ENCODE measurements at regions of chrX and their contacts with region 1.

Region 1: GRCh38 chrX:38654302-38654701 is 93.0 kb downstream of the TSPAN7 start:
- DNase-seq: no peak
- ATAC-seq: peak in 3 of 4 donors; percentile 29 to 55 (median 50)
- H3K4me3 ChIP-seq: no peak overlapping the region
- H3K27ac ChIP-seq: no peak overlapping the region
- H3K4me1 ChIP-seq: peaks cover 0 to 3% (median 0%) of the 10 kb centered on the region in 12 donors
- H3K27me3 ChIP-seq: peaks cover 0 to 9% (median 0%) of the 10 kb centered on the region in 9 donors
- CTCF ChIP-seq: peak; percentile 29 to 61 (median 45)
- POLR2A ChIP-seq: no peak

Region 2: DNA sequence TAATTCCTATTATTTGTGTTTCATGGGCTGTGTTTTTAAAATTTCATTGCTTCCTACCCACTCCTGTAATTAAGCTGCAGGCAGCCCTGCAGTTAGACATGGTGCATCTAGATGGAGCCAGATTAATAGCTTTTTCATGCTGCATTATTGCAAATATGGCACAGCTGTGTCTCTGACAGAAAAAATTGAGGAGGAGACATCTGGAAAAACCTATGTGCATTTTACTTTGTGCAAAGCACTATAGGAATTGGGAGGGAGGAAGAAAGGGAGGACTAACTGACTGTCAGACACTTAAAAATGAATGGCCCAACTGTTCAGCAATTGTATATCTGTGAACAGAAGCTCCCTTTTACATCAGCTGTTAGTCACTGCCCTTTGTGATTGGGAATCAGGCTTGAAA is 318.9 kb before region 1 on chrX:
- intact Hi-C with region 1: loop called in 4 of 10 experiments (anchors 10 kb)
- DNase-seq: no peak
- ATAC-seq: no peak
- H3K4me3 ChIP-seq: no peak overlapping the region
- H3K27ac ChIP-seq: no peak overlapping the region
- H3K4me1 ChIP-seq: no peaks in the 10 kb centered on the region
- H3K27me3 ChIP-seq: peaks cover 0 to 29% (median 0%) of the 10 kb centered on the region in 9 donors
- CTCF ChIP-seq: peak in 5 of 12 donors; percentile 19 to 38 (median 31)
- POLR2A ChIP-seq: no peak

Region 3: GRCh38 chrX:38458071-38458470 is 196.2 kb before region 1 on chrX:
- intact Hi-C with region 1: loop called in 3 of 10 experiments (anchors 5 to 10 kb)
- DNase-seq: no peak
- ATAC-seq: no peak
- H3K4me3 ChIP-seq: no peak overlapping the region
- H3K27ac ChIP-seq: no peak overlapping the region
- H3K4me1 ChIP-seq: no peaks in the 10 kb centered on the region
- H3K27me3 ChIP-seq: peaks cover 0 to 10% (median 0%) of the 10 kb centered on the region in 9 donors
- CTCF ChIP-seq: peak in 5 of 12 donors; percentile 13 to 36 (median 20)
- POLR2A ChIP-seq: no peak

Region 4: GRCh38 chrX:38561126-38561868 is 93.0 kb before region 1 on chrX and contains the start of gene TSPAN7:
- intact Hi-C with region 1: loop called in 1 of 10 experiments (anchors 5 kb)
- DNase-seq: peak; percentile 82 to 91 (median 83)
- ATAC-seq: peak; percentile 73 to 97 (median 94)
- H3K4me3 ChIP-seq: peak within 1 kb of the TSS; percentile 11 to 69 (median 57)
- H3K27ac ChIP-seq: peak within 1 kb of the TSS in 8 of 12 donors; percentile 22 to 62 (median 44)
- H3K4me1 ChIP-seq: peaks cover 0 to 5% (median under 1%) of the 10 kb centered on the region in 12 donors
- H3K27me3 ChIP-seq: peaks cover 0 to 17% (median 0%) of the 10 kb centered on the region in 9 donors
- CTCF ChIP-seq: no peak
- POLR2A ChIP-seq: peak in 1 of 2 donors; percentile 26
- total RNA-seq, gene TSPAN7: 9.1 to 48.5 (median 17.5) TPM

Region 5: DNA sequence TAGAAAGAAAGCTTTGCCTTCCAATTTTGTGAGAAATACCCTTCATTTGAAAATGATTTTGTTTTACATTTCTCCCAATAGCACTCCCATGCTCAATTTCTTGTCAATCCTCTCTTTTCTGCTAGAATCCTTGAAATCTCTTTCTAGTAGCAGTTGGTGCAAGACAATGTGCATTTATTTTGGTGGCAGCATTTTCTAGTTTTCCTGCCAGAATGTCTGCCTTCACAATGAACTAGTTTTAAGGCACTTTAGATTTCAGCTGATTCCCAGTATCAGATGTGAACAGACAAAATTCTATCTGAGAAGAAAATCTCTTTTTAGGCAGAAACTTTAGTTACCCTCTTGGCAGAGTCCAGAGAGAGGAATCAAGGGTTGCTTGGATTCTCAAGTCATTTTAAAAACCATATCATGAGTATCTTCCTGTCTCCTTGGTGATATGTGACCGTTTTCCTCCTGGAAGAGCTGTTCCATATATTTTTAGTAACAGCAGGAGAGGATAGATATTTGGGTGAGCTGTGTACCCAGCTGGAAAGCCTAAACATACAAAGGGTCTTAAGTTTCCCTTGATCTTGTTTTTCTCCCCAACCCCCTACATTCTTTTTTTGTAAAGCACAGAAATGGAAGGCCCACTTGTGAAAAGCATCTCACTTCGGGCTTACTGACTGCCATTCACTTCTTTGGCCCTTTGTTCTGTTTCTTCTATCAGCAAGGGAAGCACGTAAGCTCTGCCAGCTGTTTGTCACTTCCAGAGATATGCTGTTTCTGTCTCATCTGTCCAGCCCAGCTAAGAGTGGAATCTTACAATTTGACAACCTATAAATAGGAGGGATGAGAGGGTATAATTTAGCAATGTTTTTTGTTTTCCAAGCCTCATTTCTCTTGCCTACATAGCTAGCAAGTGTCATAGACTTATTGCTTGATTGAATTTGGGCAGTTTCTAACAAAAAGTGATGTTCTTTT is 54.2 kb before region 1 on chrX:
- intact Hi-C with region 1: loop called in 1 of 10 experiments (anchors 2 kb)
- DNase-seq: no peak
- ATAC-seq: no peak
- H3K4me3 ChIP-seq: no peak overlapping the region
- H3K27ac ChIP-seq: no peak overlapping the region
- H3K4me1 ChIP-seq: peaks cover 0 to 8% (median 1%) of the 10 kb centered on the region in 12 donors
- H3K27me3 ChIP-seq: peaks cover 0 to 31% (median 0%) of the 10 kb centered on the region in 9 donors
- CTCF ChIP-seq: no peak
- POLR2A ChIP-seq: no peak